PC-9 (cell line): ENCODE measurements at regions of chr12 and their contacts with region 1.

Region 1: DNA sequence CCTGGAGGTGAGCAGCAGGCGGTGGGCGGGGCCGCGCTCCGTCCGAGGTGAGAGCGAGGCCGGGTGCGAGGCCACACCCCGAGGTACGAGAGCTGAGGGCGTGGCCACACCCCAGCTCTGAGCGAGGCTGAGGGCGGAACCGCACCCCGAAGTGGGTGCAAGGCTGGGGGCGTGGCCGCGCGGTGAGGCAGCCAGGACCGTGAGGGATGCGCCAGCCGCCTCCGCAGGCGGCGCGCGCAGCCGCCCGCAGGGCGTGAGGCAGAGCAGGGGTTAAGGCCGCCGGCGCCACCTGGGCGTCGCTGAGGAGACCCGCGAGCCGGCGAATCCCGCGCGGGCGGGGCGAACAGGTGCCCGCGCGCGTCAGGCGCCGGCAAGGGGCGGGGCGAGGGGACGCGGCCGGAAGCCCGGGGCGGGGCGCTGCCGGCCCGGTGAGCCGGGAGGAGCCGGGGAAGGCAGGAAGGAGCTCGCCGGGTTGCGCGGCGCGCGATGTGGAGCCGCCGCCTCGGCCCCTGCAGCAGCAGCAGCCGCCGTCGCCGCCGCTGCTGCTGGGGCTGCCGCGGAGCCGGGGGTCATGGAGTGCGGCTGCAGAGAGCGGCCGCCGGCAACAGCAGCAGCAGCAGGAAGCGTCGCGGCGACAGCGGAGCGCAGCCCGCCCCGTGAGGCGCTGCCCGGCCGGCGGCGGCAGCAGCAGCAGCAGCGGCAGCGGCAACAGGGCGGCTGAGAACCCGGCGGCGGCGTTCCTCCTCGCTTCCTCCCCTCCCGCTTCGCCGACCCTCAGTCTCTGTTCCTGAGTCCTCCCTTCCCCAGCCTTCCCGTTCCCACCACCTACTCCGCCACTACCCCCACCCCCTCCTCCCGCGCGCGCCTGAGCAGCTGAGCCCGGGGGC is at the start of gene BICDL1:
- DNase-seq: peak; percentile 82 to 96
- H3K4me3 ChIP-seq: peak within 1 kb of the TSS; percentile 68
- H3K27ac ChIP-seq: peak within 1 kb of the TSS; percentile 27
- H3K4me1 ChIP-seq: peaks cover 21% of the 10 kb centered on the region
- H3K27me3 ChIP-seq: no peaks in the 10 kb centered on the region
- CTCF ChIP-seq: peak; percentile 1; the same call in 1 of the 2 replicates
- total RNA-seq, gene BICDL1: 14.4 and 18.6 TPM in 2 replicates

Region 2: DNA sequence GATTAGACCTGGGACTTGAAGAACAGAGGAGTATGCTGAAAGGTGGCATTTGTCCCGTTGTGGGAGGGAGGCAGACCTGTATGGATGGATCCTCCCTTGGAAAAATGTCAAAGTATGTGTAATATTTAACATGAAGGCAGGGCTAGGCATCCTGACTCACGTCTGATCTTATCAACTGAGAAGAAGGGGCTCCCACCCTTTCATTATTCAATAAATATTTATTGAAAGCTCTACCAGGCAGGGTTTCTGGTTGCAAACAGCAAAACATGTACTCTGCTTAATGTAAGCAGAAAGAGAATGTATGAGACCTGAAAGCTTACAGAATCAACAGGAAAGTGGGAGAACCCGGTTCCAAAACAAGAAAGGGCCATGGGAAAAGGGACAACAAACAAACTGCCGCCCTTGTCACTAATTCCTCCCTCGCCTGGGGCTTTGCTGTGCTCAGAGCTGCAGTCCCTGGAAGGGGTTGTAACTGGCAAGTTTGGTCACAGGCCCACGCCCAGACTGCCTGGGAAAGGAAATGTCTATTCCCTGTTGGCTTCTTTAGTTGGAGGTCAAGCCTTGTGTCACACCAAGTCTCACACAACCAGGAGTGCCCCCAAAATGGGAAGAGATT is 90.5 kb after region 1 on chr12:
- CTCF ChIA-PET with region 1: interaction called, 3 read pairs
- POLR2A ChIA-PET with region 1: interaction called, 5 read pairs
- intact Hi-C with region 1: loop called (anchors 1 kb)
- DNase-seq: peak; percentile 71 to 92
- H3K4me3 ChIP-seq: peak overlapping the region; percentile 23; the same call in 1 of the 2 replicates
- H3K27ac ChIP-seq: peak overlapping the region; percentile 98
- H3K4me1 ChIP-seq: peaks cover 42% of the 10 kb centered on the region
- H3K27me3 ChIP-seq: no peaks in the 10 kb centered on the region
- CTCF ChIP-seq: no peak

Region 3: GRCh38 chr12:120292661-120293531 is 303.9 kb after region 1 on chr12 and contains the start of gene RNU4-1:
- CTCF ChIA-PET with region 1: no interaction called
- POLR2A ChIA-PET with region 1: no interaction called
- intact Hi-C with region 1: no loop called
- DNase-seq: peak; percentile 81 to 97
- H3K4me3 ChIP-seq: peak within 1 kb of the TSS; percentile 64
- H3K27ac ChIP-seq: peak within 1 kb of the TSS; percentile 99
- H3K4me1 ChIP-seq: peaks cover 19% of the 10 kb centered on the region
- H3K27me3 ChIP-seq: no peaks in the 10 kb centered on the region
- CTCF ChIP-seq: no peak
- total RNA-seq, gene RNU4-1: 1,857 and 3,341 TPM in 2 replicates